Posterior vena cava (tissue), 2 donors: ENCODE measurements at regions of chr4 and their contacts with region 1.

Region 1: GRCh38 chr4:125719987-125720386 is 405.2 kb downstream of the FAT4 start:
- DNase-seq: no peak

Region 2: DNA sequence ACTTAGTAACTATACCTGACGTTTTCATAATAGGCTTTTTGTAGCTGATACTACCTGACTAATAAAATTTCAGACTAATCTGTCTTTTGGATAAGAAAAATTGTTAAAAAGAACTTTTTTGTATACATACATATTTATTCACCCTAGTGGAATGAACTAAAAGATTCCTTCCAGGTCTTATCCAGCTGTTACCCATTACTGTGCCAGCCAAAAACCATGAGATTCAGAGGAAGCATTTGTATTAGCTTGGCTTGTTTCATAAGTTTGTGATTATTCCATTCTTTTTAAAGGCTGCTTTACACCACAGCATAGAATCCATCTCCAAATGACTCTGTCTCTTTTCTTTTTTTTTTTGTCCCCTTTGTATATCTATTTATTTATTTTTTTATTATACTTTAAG is 255.8 kb before region 1 on chr4:
- intact Hi-C with region 1: loop called in 1 of 2 experiments (anchors 5 kb)
- DNase-seq: no peak

Region 3: DNA sequence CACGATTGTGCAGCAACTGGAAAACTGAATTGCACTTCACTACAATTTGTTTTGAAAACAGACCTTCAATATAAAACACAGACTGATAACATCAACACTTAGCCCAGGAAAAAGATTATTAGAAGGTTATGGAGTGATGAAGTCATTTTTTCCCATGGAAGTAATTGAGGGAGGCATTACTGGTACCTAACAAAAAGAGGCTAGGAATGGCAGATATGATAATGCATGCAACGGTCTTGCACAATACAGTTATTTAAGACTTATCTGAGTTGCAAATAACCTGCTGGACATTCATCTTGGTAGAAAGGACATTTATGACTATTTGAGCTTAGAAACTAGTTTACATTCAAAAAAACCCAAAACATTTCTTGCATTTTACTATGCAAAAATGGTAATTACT is 626.7 kb after region 1 on chr4:
- intact Hi-C with region 1: no loop called
- DNase-seq: no peak